Activated naive CD4-positive, alpha-beta T cell treated with anti-CD3 and anti-CD28 coated beads, Interleukin-2, amount 10 ng/mL, durations not matched to agents 7 days and 5 days (primary cell): ENCODE measurements at regions of chr19 and their contacts with region 1.

Region 1: GRCh38 chr19:33778089-33778791 is 18.4 kb upstream of the KCTD15 start:
- DNase-seq: peak; percentile 87
- H3K4me3 Mint-ChIP-seq: no peak overlapping the region
- H3K27ac Mint-ChIP-seq: no peak overlapping the region
- H3K4me1 Mint-ChIP-seq: peaks cover 3% of the 10 kb centered on the region
- H3K27me3 Mint-ChIP-seq: peaks cover 31% of the 10 kb centered on the region

Region 2: DNA sequence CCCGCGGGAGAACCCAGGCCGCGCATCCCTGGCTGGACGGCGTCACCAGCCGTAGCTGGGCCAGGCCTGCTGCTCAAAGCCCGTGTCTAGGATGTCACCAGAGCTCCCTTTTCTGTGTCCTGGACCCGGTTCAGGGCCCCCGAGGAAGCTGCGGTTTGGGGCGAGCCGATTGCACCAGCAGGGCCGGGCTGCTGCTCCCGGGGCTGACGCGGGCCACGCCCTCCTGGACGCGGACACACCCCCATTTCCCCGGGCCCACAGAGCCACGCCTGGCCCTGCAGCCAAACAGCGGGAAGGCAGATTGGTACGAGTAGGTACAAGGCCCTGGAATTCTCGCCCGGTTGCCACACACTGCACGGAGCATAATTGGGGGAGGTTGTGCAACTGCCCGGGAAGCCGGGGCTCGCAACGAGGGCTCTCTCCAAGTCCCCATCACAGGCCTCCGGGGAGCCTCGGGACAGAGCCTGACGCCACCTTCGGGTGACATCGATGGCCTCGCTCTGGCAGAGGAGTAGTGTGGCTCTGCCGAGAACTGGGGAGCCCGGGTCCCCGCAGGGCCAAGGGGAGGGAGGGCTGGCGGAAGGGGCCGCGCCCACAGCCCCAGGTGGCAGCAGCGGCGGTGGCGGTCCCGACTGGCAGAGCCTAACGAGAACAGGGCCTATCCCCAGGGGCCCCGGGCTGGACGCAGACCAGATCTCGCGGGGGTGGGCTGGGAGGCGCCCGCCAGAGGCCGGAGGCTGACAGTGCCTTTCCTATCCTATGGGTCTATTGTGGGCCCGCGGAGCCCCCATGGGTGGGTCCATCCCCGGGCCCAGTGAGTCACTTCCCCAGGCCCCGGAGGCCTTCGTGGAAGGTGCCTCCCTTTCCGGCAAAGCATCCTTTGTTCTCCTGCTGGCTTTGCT is 41.9 kb after region 1 on chr19:
- CTCF ChIA-PET with region 1: interaction called, 12 read pairs
- DNase-seq: peak; percentile 83
- H3K4me3 Mint-ChIP-seq: peak overlapping the region; percentile 75
- H3K27ac Mint-ChIP-seq: peak overlapping the region; percentile 84
- H3K4me1 Mint-ChIP-seq: peaks cover 40% of the 10 kb centered on the region
- H3K27me3 Mint-ChIP-seq: peaks cover 50% of the 10 kb centered on the region

Region 3: DNA sequence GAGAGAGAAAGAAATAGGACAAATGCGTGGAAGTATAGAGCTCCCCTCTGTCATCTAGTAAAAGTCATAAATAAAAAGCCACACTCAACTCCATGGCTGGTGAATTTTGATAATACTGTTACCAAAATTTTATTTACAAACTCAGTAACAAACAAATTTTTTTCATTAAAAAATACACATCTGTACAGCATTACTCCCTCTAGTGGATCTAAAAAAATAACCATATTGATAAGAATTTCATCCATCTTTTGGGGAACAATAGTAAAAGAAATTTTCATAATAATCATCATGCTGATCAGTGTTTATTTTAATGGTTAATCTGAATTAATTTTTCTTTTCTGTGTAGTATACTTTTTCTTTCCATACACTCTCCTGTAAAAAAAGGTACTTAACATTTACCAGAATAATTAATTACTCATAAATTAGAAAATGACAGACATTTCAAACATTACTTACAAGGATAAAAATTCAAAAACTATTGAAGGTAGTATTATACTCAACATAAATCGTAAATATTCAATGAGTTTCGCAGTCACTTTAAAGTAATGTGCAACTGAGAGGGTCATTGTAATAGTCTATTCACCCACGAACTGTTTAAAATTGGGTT is 220.6 kb after region 1 on chr19:
- CTCF ChIA-PET with region 1: interaction called, 23 read pairs
- DNase-seq: no peak
- H3K4me3 Mint-ChIP-seq: no peak overlapping the region
- H3K27ac Mint-ChIP-seq: no peak overlapping the region
- H3K4me1 Mint-ChIP-seq: no peaks in the 10 kb centered on the region
- H3K27me3 Mint-ChIP-seq: peaks cover 3% of the 10 kb centered on the region

Region 4: GRCh38 chr19:34096020-34096915 is 318.0 kb after region 1 on chr19:
- CTCF ChIA-PET with region 1: interaction called, 47 read pairs
- DNase-seq: no peak
- H3K4me3 Mint-ChIP-seq: no peak overlapping the region
- H3K27ac Mint-ChIP-seq: no peak overlapping the region
- H3K4me1 Mint-ChIP-seq: no peaks in the 10 kb centered on the region
- H3K27me3 Mint-ChIP-seq: peaks cover 21% of the 10 kb centered on the region